Ovary (tissue), 10 donors: ENCODE measurements at regions of chr21 and their contacts with region 1.

Region 1: GRCh38 chr21:17925000-17925610 is 105.9 kb upstream of the C21orf91 start:
- DNase-seq: peak in 3 of 5 donors; percentile 12 to 52 (median 27)
- H3K4me3 ChIP-seq: no peak overlapping the region
- H3K27ac ChIP-seq: no peak overlapping the region
- H3K4me1 ChIP-seq: no peaks in the 10 kb centered on the region
- H3K27me3 ChIP-seq: no peaks in the 10 kb centered on the region
- CTCF ChIP-seq: peak; percentile 17 to 45 (median 36)
- EP300 ChIP-seq: no peak
- POLR2A ChIP-seq: no peak

Region 2: GRCh38 chr21:16034446-16035190 is 1890.5 kb before region 1 on chr21:
- intact Hi-C with region 1: no loop called
- DNase-seq: no peak
- H3K4me3 ChIP-seq: no peak overlapping the region
- H3K27ac ChIP-seq: no peak overlapping the region
- H3K4me1 ChIP-seq: no peaks in the 10 kb centered on the region
- H3K27me3 ChIP-seq: no peaks in the 10 kb centered on the region
- CTCF ChIP-seq: no peak
- EP300 ChIP-seq: no peak
- POLR2A ChIP-seq: no peak

Region 3: DNA sequence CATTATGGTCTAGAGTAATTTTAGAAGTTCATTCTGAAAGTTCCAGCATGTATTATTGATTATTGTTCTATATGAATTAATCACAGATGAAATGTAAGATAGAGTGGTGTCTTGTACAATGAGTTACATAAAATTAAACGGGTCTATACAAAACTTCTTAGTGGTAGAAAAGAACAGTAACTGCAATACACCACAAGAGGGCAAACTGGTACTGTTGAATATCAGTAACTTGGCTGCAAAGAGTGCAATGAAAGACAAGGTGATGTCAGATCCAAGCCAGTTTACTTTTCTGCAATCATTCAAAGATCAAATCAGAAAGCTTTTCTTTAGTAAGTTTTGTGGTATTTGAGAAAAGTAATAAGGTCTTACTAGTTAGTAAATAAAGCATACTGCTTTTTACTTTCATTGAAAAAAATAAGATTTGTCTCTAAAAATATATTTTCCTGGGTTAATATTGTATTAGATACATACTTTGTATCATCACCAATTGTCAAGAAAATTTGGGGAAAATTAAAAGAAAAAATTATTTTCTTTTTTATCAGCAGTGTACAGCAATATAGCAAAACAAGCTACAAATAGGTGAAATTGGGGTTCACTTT is 246.0 kb before region 1 on chr21:
- intact Hi-C with region 1: loop called in 3 of 4 experiments (anchors 5 to 10 kb)
- DNase-seq: no peak
- H3K4me3 ChIP-seq: no peak overlapping the region
- H3K27ac ChIP-seq: no peak overlapping the region
- H3K4me1 ChIP-seq: no peaks in the 10 kb centered on the region
- H3K27me3 ChIP-seq: no peaks in the 10 kb centered on the region
- CTCF ChIP-seq: peak; percentile 59 to 68 (median 64)
- EP300 ChIP-seq: no peak
- POLR2A ChIP-seq: no peak

Region 4: GRCh38 chr21:17688912-17689874 is 235.9 kb before region 1 on chr21:
- intact Hi-C with region 1: loop called in 2 of 4 experiments (anchors 5 to 10 kb)
- DNase-seq: peak; percentile 32 to 74 (median 35)
- H3K4me3 ChIP-seq: no peak overlapping the region
- H3K27ac ChIP-seq: no peak overlapping the region
- H3K4me1 ChIP-seq: peaks cover 4% of the 10 kb centered on the region
- H3K27me3 ChIP-seq: no peaks in the 10 kb centered on the region
- CTCF ChIP-seq: no peak
- EP300 ChIP-seq: no peak
- POLR2A ChIP-seq: no peak